Activated CD4-positive, alpha-beta memory T cell treated with anti-CD3 and anti-CD28 coated beads for 36 hours (primary cell): ENCODE measurements at regions of chr11 and their contacts with region 1.

Region 1: GRCh38 chr11:36441610-36442208 is 68.4 kb downstream of the TRAF6 start:
- DNase-seq: peak; percentile 55
- H3K4me3 Mint-ChIP-seq: no peak overlapping the region
- H3K27ac Mint-ChIP-seq: peak overlapping the region; percentile 34
- H3K4me1 Mint-ChIP-seq: peaks cover 19% of the 10 kb centered on the region
- H3K27me3 Mint-ChIP-seq: no peaks in the 10 kb centered on the region

Region 2: GRCh38 chr11:36385121-36385970 is 56.4 kb before region 1 on chr11:
- CTCF ChIA-PET with region 1: no interaction called
- POLR2A ChIA-PET with region 1: no interaction called
- intact Hi-C with region 1: loop called (anchors 2 kb)
- DNase-seq: peak; percentile 55
- H3K4me3 Mint-ChIP-seq: peak overlapping the region; percentile 5
- H3K27ac Mint-ChIP-seq: peak overlapping the region; percentile 73
- H3K4me1 Mint-ChIP-seq: peaks cover 70% of the 10 kb centered on the region
- H3K27me3 Mint-ChIP-seq: no peaks in the 10 kb centered on the region

Region 3: DNA sequence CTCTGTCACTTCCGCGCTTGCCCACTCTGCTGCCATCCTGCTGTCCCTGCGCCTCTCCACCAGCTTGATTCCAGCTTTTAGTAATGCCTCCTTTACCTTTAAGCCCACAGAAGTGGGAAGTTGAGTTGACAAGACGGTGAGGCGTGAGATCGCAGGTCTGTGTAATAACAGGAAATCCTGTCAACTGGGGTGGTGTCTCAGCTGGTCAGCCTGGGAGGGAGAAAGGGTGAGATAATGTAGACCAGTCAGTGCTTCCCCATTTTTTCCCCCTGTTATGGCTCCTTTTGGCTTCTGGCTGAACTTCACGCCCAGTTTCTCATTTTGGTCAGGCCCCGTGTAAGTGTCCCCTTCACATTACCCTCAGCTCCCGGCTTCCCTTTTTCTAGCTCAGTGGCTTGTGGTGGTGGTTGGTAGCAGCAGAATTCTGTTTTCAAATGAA is 30.5 kb before region 1 on chr11:
- CTCF ChIA-PET with region 1: no interaction called
- POLR2A ChIA-PET with region 1: no interaction called
- intact Hi-C with region 1: loop called (anchors 1 kb)
- DNase-seq: peak; percentile 40
- H3K4me3 Mint-ChIP-seq: peak overlapping the region; percentile 10
- H3K27ac Mint-ChIP-seq: peak overlapping the region; percentile 95
- H3K4me1 Mint-ChIP-seq: peaks cover 67% of the 10 kb centered on the region
- H3K27me3 Mint-ChIP-seq: no peaks in the 10 kb centered on the region

Region 4: DNA sequence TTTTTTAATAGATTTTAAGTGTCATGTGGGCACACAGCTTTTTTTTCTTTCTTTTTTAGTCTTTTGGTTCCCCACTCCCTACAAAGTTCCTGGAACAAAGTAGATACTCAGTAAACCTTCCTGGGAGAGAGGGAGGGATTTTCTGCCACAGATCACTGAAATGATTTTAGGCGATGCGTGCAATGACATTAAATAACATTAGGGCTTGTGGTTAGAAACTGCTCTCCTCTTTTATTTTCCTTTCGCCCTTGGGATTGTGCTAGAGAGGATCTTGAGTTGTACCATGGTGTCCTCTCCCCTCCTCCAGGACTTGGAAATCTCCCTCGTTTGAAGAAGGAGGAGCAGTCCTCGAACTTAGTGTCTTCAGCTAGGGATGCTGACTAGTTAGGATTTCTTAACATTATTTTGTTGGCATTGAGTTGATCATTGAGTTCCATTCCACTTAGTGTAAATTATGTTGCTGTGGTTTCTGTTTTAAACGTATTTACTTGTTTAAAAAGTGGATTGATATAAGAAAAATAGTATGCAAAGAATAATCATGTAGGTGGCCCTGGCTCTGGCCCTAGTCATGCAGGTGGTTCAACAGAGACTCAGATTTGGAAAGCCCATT is 20.1 kb before region 1 on chr11:
- CTCF ChIA-PET with region 1: no interaction called
- POLR2A ChIA-PET with region 1: interaction called, 5 read pairs
- intact Hi-C with region 1: loop called (anchors 1 kb)
- DNase-seq: no peak
- H3K4me3 Mint-ChIP-seq: peak overlapping the region; percentile 31
- H3K27ac Mint-ChIP-seq: peak overlapping the region; percentile 85
- H3K4me1 Mint-ChIP-seq: peaks cover 79% of the 10 kb centered on the region
- H3K27me3 Mint-ChIP-seq: no peaks in the 10 kb centered on the region

Region 5: DNA sequence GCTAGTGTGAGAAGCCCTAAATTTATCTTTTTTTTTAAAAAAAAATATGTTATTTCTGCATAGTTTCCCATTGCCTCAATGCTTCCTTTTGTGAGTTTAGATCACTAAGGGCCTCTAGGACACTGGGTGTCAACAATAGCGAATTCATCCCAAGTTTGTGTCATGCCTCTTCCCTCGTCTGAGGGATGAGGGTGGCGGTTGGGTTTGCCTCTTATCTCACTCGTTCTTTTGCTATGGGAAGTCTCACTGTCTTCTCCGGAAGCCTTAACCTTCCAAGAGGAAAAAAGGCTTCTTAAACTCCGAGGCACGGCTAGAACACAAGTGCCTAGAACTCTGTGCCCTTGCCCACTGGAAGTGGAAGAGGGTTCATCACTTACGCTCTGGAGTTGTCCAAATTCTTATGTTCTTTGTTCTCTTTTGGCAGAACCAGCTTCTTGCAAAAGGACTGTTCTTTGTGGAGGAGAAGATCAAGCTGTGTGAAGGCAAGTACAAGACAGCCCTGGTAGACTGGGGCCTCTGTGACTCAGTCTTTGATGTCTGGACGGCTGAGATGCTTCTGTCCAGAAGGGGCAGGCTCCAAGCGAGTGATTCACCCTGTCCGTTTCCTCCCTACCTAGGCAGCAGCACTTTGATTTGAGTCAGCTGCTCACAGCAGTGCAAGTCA is 10.1 kb before region 1 on chr11:
- CTCF ChIA-PET with region 1: no interaction called
- POLR2A ChIA-PET with region 1: interaction called, 4 read pairs
- intact Hi-C with region 1: loop called (anchors 1 kb)
- DNase-seq: peak; percentile 81
- H3K4me3 Mint-ChIP-seq: peak overlapping the region; percentile 31
- H3K27ac Mint-ChIP-seq: peak overlapping the region; percentile 80
- H3K4me1 Mint-ChIP-seq: peaks cover 31% of the 10 kb centered on the region
- H3K27me3 Mint-ChIP-seq: no peaks in the 10 kb centered on the region

Region 6: DNA sequence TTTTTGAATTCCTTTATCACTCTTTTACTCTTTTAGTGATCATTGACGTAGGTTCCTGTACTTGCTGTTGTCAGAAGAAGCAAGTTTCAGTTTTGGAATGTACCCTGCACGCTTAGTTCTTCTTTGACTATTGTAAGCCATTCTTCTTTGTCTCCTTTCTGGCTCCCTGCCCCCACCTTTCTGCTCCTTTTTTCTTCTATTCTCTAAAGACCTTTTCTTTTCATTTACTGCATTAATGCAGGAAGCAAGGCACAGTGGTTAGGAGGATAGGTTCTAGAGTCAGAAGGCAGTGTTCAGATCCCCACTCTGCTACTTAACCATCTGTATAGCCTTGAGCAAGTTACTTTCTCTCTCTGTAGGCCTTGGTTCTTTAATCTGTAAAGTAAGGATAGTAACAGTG is 190.1 kb after region 1 on chr11:
- CTCF ChIA-PET with region 1: no interaction called
- POLR2A ChIA-PET with region 1: no interaction called
- intact Hi-C with region 1: no loop called
- DNase-seq: peak; percentile 25
- H3K4me3 Mint-ChIP-seq: no peak overlapping the region
- H3K27ac Mint-ChIP-seq: no peak overlapping the region
- H3K4me1 Mint-ChIP-seq: peaks cover 8% of the 10 kb centered on the region
- H3K27me3 Mint-ChIP-seq: peaks cover 11% of the 10 kb centered on the region